Activated CD4-positive, alpha-beta memory T cell treated with anti-CD3 and anti-CD28 coated beads, Interleukin-2, amount 10 ng/mL, durations not matched to agents 7 days and 5 days (primary cell): ENCODE measurements at regions of chr3 and their contacts with region 1.

Region 1: GRCh38 chr3:53195602-53196574 is 34.9 kb downstream of the PRKCD start:
- DNase-seq: peak; percentile 58
- H3K4me3 Mint-ChIP-seq: no peak overlapping the region
- H3K27ac Mint-ChIP-seq: no peak overlapping the region
- H3K4me1 Mint-ChIP-seq: peaks cover 23% of the 10 kb centered on the region
- H3K27me3 Mint-ChIP-seq: peaks cover 3% of the 10 kb centered on the region

Region 2: GRCh38 chr3:53114011-53114400 is 81.9 kb before region 1 on chr3:
- CTCF ChIA-PET with region 1: interaction called, 53 read pairs
- POLR2A ChIA-PET with region 1: interaction called, 4 read pairs
- DNase-seq: peak; percentile 86
- H3K4me3 Mint-ChIP-seq: no peak overlapping the region
- H3K27ac Mint-ChIP-seq: no peak overlapping the region
- H3K4me1 Mint-ChIP-seq: peaks cover 20% of the 10 kb centered on the region
- H3K27me3 Mint-ChIP-seq: no peaks in the 10 kb centered on the region

Region 3: DNA sequence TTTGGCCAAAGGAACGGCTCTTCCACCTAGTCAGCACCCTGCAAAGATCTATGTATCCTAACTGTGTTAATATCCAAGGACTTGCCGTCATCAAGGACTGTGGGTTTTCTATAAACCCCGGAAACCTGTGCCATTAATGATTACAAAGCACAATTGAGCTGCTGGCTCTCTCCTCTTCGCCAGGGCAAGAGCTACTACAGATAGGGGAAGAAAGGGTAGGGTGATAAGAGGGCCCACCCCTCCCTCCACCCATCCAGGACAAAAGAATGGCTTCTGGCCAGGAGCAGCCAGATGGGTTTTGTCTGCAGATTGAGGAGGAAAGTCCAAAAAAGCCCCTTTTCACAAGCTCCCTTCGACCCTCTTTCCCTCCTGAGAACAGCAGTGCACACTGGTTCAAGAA is 75.6 kb before region 1 on chr3:
- CTCF ChIA-PET with region 1: interaction called, 52 read pairs
- POLR2A ChIA-PET with region 1: no interaction called
- DNase-seq: no peak
- H3K4me3 Mint-ChIP-seq: no peak overlapping the region
- H3K27ac Mint-ChIP-seq: no peak overlapping the region
- H3K4me1 Mint-ChIP-seq: no peaks in the 10 kb centered on the region
- H3K27me3 Mint-ChIP-seq: no peaks in the 10 kb centered on the region

Region 4: GRCh38 chr3:53130179-53131061 is 65.5 kb before region 1 on chr3 and contains the start of gene RFT1:
- CTCF ChIA-PET with region 1: interaction called, 115 read pairs
- POLR2A ChIA-PET with region 1: interaction called, 4 read pairs
- DNase-seq: peak; percentile 99
- H3K4me3 Mint-ChIP-seq: peak within 1 kb of the TSS; percentile 83
- H3K27ac Mint-ChIP-seq: peak within 1 kb of the TSS; percentile 84
- H3K4me1 Mint-ChIP-seq: peaks cover 29% of the 10 kb centered on the region
- H3K27me3 Mint-ChIP-seq: no peaks in the 10 kb centered on the region
- total RNA-seq, gene RFT1: 26.4 to 27.6 TPM

Region 5: DNA sequence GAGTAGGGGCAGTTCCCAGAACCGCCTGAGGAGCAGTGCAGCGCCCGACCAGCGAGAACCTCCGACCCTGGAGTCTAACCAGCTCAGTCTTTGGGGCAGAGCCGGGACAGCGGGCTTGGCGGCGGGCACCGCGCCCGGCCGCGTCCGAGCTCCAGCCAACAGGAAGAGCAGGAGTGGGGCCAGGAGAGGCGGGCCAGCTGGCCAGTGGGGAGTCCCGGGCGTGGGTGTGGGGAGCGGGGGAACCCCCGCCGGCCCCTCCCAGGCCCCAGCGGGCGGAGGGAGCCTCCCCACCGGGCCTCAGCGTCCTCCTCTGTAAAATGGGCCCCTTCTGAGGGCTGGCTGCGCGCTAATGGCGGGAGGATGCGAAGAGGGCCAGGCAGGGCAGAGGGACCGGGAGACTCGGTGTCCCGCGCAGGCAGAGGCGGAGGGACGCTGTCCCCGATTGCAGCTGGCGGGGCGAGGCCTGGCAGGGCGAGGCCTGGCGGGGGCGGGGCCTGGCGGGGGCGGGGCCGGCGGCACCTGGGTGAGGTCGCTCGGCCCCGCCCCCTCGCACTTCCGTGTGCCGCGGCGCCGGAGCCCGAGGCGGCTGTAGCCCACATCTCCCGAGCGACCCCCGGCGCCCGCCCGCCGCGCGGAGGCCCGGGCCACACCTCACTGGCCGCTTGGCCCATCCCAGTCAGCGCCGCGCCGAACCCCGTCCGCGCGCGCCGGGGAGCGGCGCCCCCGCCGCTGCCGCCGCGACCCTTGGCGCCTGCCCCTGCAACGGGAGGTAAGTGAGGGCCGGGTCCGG is 35.0 kb before region 1 on chr3 and contains the start of gene PRKCD:
- CTCF ChIA-PET with region 1: interaction called, 10 read pairs
- POLR2A ChIA-PET with region 1: interaction called, 3 read pairs
- DNase-seq: peak; percentile 83
- H3K4me3 Mint-ChIP-seq: peak within 1 kb of the TSS; percentile 86
- H3K27ac Mint-ChIP-seq: peak within 1 kb of the TSS; percentile 68
- H3K4me1 Mint-ChIP-seq: peaks cover 21% of the 10 kb centered on the region
- H3K27me3 Mint-ChIP-seq: peaks cover 31% of the 10 kb centered on the region
- total RNA-seq, gene PRKCD: 23.4 to 24.8 TPM

Region 6: GRCh38 chr3:53170325-53171063 is 25.4 kb before region 1 on chr3:
- CTCF ChIA-PET with region 1: interaction called, 14 read pairs
- POLR2A ChIA-PET with region 1: interaction called, 3 read pairs
- DNase-seq: peak; percentile 41
- H3K4me3 Mint-ChIP-seq: no peak overlapping the region
- H3K27ac Mint-ChIP-seq: peak overlapping the region; percentile 23
- H3K4me1 Mint-ChIP-seq: peaks cover 45% of the 10 kb centered on the region
- H3K27me3 Mint-ChIP-seq: no peaks in the 10 kb centered on the region

Region 7: GRCh38 chr3:54104084-54104483 is 908.2 kb after region 1 on chr3:
- CTCF ChIA-PET with region 1: no interaction called
- POLR2A ChIA-PET with region 1: no interaction called
- DNase-seq: no peak
- H3K4me3 Mint-ChIP-seq: no peak overlapping the region
- H3K27ac Mint-ChIP-seq: no peak overlapping the region
- H3K4me1 Mint-ChIP-seq: no peaks in the 10 kb centered on the region
- H3K27me3 Mint-ChIP-seq: peaks cover 3% of the 10 kb centered on the region